Left cardiac atrium (tissue), 4 donors: ENCODE measurements at regions of chr6 and their contacts with region 1.

Region 1: GRCh38 chr6:81838006-81838405 is 85.5 kb upstream of the TENT5A start:
- DNase-seq: no peak
- ATAC-seq: peak; percentile 55 to 94

Region 2: DNA sequence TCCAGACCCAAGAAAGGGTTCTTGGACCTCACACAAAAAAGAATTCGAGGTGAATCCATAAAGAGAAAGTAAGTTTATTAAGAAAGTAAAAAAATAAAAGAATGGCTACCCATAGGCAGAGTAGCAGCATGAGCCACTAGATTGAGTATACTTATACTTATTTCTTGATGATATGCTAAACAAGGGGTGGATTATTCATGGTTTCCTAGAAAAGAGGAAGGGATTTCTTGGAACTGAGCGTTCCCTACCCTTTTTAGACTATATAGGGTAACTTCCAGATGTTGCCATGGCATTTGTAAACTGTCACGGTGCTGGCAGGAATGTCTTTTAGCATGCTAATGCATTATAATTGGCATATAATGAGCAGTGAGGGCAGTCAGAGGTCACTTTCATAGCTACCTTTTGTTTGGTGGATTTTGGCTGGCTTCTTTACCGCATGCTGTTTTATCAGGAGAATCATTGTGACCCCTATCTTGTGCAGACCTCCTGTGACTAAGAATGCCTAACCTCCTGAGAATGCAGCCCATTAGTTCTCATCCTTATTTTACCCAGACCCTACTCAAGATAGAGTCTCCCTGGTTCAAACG is 129.8 kb before region 1 on chr6:
- intact Hi-C with region 1: no loop called
- DNase-seq: no peak
- ATAC-seq: no peak

Region 3: GRCh38 chr6:81889377-81890053 is 51.5 kb after region 1 on chr6:
- intact Hi-C with region 1: loop called in 1 of 2 experiments (anchors 5 kb)
- DNase-seq: no peak
- ATAC-seq: no peak

Region 4: DNA sequence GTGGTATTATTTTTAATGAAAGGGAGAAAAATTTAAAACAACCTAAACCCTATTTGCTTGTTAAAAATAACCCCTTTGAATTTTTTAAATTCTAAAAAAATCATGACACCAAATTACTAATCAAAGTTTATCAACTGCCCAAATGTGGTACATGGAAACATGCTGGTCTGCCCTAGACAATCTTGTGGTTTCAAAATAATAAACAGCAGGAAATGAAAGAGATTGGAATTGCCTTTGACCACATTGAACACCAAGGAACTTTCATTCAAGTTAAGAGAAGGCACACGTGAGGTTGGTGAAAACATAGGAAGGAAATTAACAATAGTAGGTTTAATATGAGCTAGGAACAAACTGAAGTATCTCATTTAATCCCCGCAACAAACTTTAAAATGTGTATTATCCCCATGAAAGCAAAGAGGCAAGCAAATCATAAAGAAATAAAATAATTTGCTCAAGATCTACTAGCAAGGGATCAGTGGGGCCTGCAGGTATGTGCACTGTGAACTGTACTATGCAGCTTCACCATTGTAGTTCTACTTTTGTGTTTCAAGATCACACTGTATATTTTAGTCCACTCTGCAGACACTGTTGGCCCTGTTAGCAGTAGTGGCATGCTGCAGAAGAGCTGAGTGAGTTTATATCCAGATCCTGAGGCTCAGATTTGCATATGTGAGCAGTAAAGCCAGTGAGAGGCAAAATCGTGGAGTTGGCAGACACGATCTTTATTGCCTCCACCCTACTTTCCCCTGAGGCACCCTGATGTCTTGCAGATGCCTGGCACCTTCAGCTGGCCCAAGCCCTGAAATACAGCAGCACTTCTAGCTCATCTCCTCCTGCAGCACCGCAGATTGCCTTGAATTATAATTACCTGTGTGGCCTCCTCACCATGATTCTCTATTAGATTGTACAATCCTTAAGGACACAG is 72.2 kb after region 1 on chr6:
- intact Hi-C with region 1: no loop called
- DNase-seq: no peak
- ATAC-seq: peak in 1 of 2 donors; percentile 59